ENCODE measurements at regions of chr7 and their contacts with region 1.

Region 1: GRCh38 chr7:137898839-137899721 is 52.3 kb upstream of the DGKI start:
- DNase-seq: peak; percentile 75
- ATAC-seq: peak; percentile 93
- H3K4me3 ChIP-seq: no peak overlapping the region
- H3K27ac ChIP-seq: no peak overlapping the region
- H3K4me1 ChIP-seq: no peaks in the 10 kb centered on the region; the same call in 1 of the 2 replicates
- H3K27me3 ChIP-seq: no peaks in the 10 kb centered on the region
- CTCF ChIP-seq: peak; percentile 85

Region 2: DNA sequence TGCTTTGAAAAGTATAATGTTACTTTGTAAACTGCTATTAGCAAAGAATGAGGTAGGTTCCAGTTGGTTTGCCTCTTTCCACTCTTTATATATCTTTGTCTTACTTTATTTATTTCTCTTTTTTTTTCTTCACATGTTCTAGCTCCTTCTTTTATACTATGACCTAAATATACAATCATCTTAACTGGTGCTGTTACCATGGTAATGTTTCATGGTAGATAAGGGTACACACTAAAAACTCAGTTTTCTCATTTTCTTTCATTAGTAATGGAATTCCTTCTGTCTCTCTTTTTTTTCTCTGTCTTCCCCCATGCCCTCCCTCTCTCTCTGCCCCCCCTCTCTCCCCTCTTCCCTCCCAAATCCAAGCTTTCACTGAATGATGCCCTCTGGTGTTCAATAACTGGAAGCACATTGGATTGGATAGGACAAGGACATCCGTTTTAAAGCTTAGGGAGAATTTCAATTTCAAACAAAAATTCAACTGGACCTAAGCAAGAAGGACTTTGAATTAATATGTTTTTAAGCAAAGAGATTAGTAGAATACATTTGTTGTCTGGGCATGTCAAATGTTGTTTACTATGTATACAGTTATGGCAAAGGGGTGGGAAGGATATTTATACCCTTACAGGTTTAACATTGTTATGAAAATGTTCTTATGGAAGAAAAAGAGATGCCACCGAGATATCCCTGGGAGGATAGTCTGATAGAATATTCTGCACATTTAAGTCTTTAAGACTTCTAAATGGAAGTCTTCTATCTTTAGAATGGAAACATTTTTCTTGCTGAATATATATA is 1024.6 kb before region 1 on chr7:
- CTCF ChIA-PET with region 1: no interaction called
- POLR2A ChIA-PET with region 1: no interaction called
- intact Hi-C with region 1: loop called (anchors 10 kb)
- DNase-seq: peak; percentile 55
- ATAC-seq: peak; percentile 51
- H3K4me3 ChIP-seq: no peak overlapping the region
- H3K27ac ChIP-seq: no peak overlapping the region
- H3K4me1 ChIP-seq: no peaks in the 10 kb centered on the region
- H3K27me3 ChIP-seq: peaks cover 67% of the 10 kb centered on the region
- CTCF ChIP-seq: peak; percentile 70

Region 3: DNA sequence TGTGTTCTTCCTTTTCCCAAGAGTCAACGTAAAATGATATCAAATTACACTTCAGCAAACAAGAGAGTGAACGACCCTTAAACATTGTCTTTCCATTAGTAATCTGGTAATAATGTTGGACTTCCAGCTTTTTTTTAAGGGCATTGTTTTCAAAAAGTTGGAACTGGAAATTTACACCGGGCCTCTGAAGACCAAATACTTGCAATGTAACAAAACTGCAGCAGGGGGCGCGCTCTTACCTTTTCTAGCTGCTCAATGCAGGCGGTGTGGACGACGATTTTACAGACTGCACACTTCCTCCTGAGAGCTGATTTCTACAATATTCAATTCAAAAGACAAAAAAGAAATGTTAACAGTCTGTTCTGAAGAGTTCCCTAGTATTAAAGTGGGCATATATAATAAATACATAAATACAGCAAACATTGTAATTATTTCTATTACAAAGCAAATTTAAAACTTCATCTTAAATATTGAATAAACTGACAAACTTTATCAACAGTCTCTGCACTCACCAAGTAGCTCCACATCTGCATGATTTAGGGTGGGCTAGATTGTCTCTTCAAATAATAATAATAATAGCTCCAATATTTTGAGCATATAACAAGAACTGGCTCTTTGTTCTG is 242.7 kb before region 1 on chr7:
- CTCF ChIA-PET with region 1: interaction called, 3 read pairs
- POLR2A ChIA-PET with region 1: no interaction called
- intact Hi-C with region 1: loop called (anchors 1 kb)
- DNase-seq: peak; percentile 81
- ATAC-seq: peak; percentile 86
- H3K4me3 ChIP-seq: no peak overlapping the region
- H3K27ac ChIP-seq: no peak overlapping the region
- H3K4me1 ChIP-seq: peaks cover 13% of the 10 kb centered on the region; the same call in 1 of the 2 replicates
- H3K27me3 ChIP-seq: 0 out of 2 replicates have a peak, but pooled peaks cover 5% of the 10 kb centered on the region
- CTCF ChIP-seq: peak; percentile 85

Region 4: DNA sequence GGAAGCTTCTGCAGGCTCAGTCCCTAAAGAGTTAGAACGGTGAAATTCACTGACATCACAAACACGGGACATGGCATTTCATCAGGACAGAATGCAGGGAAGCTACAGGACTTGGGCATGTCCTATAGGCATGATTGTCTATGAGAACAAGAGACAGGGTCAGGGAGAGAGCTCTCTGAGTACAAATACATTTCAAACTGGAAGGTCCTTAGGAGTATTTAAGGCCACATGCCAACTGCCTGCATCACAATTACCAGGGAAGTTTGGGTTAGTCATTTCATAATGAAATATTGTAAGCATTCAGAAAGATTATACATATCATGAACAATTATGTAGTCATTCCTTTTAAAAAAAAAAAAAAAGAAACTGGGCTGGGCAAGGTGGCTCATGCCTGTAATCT is 31.5 kb after region 1 on chr7:
- CTCF ChIA-PET with region 1: no interaction called
- POLR2A ChIA-PET with region 1: no interaction called
- intact Hi-C with region 1: loop called (anchors 2 kb)
- DNase-seq: peak; percentile 88
- ATAC-seq: peak; percentile 83
- H3K4me3 ChIP-seq: no peak overlapping the region
- H3K27ac ChIP-seq: peak overlapping the region; percentile 84
- H3K4me1 ChIP-seq: peaks cover 26% of the 10 kb centered on the region
- H3K27me3 ChIP-seq: no peaks in the 10 kb centered on the region
- CTCF ChIP-seq: no peak

Region 5: GRCh38 chr7:138008547-138009349 is 109.7 kb after region 1 on chr7:
- CTCF ChIA-PET with region 1: interaction called, 9 read pairs
- POLR2A ChIA-PET with region 1: no interaction called
- intact Hi-C with region 1: loop called (anchors 1 kb)
- DNase-seq: peak; percentile 75
- ATAC-seq: peak; percentile 65
- H3K4me3 ChIP-seq: no peak overlapping the region
- H3K27ac ChIP-seq: no peak overlapping the region
- H3K4me1 ChIP-seq: peaks cover 4% of the 10 kb centered on the region; the same call in 1 of the 2 replicates
- H3K27me3 ChIP-seq: no peaks in the 10 kb centered on the region
- CTCF ChIP-seq: peak; percentile 86